Panc1 (cell line): ENCODE measurements at regions of chr1 and their contacts with region 1.

Region 1: GRCh38 chr1:244311784-244312532 is 139.8 kb downstream of the ADSS2 start:
- DNase-seq: no peak
- ATAC-seq: no peak
- H3K4me3 ChIP-seq: no peak overlapping the region
- H3K27ac ChIP-seq: no peak overlapping the region
- H3K4me1 ChIP-seq: no peaks in the 10 kb centered on the region
- H3K27me3 ChIP-seq: no peaks in the 10 kb centered on the region
- CTCF ChIP-seq: no peak

Region 2: GRCh38 chr1:242870966-242871365 is 1441.0 kb before region 1 on chr1:
- CTCF ChIA-PET with region 1: no interaction called
- POLR2A ChIA-PET with region 1: interaction called, 29 read pairs
- in situ Hi-C with region 1: no loop called
- intact Hi-C with region 1: no loop called
- DNase-seq: no peak
- ATAC-seq: no peak
- H3K4me3 ChIP-seq: no peak overlapping the region
- H3K27ac ChIP-seq: no peak overlapping the region
- H3K4me1 ChIP-seq: no peaks in the 10 kb centered on the region
- H3K27me3 ChIP-seq: no peaks in the 10 kb centered on the region
- CTCF ChIP-seq: no peak

Region 3: DNA sequence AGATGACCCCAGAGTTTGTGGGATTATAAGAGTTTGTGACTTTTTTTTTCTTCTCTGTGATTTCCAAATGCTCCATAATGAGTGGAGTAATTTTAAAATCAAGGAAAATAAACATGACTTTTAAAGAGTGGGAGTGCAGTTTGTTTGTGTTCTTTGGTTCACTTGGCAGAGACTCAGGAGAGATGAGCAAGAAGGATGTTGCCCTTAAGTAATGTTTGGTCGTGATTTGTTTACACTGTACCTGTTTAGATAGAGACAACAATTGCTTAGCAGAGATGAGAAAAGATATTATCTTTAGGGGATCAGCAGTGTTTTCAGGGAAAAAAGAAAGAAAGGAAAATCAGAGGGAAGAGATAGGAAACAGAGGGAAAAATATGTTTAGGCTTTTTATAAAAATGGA is 31.1 kb before region 1 on chr1:
- CTCF ChIA-PET with region 1: no interaction called
- POLR2A ChIA-PET with region 1: no interaction called
- in situ Hi-C with region 1: no loop called
- intact Hi-C with region 1: no loop called
- DNase-seq: no peak
- ATAC-seq: no peak
- H3K4me3 ChIP-seq: no peak overlapping the region
- H3K27ac ChIP-seq: no peak overlapping the region
- H3K4me1 ChIP-seq: no peaks in the 10 kb centered on the region
- H3K27me3 ChIP-seq: no peaks in the 10 kb centered on the region
- CTCF ChIP-seq: no peak

Region 4: DNA sequence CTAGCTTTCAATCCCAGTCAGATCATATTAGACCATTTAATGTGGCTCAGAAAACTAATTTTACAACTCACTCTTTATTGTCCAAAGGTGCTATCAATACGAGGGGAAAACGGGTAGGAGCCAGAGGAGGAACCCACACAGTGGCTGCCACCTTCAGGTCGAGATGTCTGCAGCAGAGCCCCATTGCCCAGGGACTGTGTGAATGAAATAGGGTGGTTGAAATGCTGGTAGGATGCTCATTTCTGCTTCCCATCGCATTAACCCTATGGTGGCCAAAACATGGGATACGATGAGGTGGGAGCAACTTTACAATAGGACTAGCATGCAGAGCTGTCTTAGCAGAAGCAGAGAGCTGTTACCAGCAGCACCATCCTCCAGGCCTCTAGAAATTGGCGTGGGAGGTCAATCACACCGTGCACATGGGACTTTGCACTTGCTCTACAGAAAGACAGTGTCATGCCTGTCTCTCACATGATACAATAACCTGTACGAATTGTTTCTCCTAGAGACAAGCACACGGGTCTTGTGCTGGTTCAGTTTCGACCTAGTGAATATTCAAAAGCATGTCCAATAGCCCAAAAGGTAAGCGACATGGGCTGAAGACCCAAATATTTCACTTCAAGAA is 271.5 kb after region 1 on chr1:
- CTCF ChIA-PET with region 1: no interaction called
- POLR2A ChIA-PET with region 1: no interaction called
- in situ Hi-C with region 1: no loop called
- intact Hi-C with region 1: no loop called
- DNase-seq: no peak
- ATAC-seq: no peak
- H3K4me3 ChIP-seq: no peak overlapping the region
- H3K27ac ChIP-seq: no peak overlapping the region
- H3K4me1 ChIP-seq: no peaks in the 10 kb centered on the region
- H3K27me3 ChIP-seq: no peaks in the 10 kb centered on the region
- CTCF ChIP-seq: no peak; the same call in 1 of the 2 replicates